HepG2 (cell line): ENCODE measurements at regions of chr20 and their contacts with region 1.

Region 1: DNA sequence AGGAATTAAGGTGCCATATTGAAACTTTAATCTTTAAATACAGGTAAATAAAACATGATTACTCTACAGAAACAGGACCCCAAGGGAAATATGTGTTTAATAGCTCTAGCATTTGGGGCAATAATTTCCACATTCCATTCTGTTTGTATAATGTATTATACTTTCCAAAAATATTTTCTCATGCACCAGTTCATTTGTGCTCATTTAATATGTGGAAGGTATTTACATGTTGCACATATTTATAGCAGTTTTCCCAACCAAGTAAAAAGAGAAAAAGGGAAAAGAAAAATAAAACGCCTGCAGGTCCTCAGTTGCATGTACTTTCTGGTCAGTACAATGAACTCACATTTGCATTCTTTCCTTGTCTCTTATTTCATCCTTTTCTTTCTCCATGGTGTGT is 129.5 kb upstream of the SULF2 start:
- DNase-seq: no peak
- ATAC-seq: no peak
- H3K4me3 ChIP-seq: no peak overlapping the region
- H3K27ac ChIP-seq: no peak overlapping the region
- H3K4me1 ChIP-seq: peaks cover 56% of the 10 kb centered on the region
- H3K27me3 ChIP-seq: no peaks in the 10 kb centered on the region
- CTCF ChIP-seq: no peak
- EP300 ChIP-seq: no peak
- POLR2A ChIP-seq: no peak
- RAD21 ChIP-seq: no peak

Region 2: DNA sequence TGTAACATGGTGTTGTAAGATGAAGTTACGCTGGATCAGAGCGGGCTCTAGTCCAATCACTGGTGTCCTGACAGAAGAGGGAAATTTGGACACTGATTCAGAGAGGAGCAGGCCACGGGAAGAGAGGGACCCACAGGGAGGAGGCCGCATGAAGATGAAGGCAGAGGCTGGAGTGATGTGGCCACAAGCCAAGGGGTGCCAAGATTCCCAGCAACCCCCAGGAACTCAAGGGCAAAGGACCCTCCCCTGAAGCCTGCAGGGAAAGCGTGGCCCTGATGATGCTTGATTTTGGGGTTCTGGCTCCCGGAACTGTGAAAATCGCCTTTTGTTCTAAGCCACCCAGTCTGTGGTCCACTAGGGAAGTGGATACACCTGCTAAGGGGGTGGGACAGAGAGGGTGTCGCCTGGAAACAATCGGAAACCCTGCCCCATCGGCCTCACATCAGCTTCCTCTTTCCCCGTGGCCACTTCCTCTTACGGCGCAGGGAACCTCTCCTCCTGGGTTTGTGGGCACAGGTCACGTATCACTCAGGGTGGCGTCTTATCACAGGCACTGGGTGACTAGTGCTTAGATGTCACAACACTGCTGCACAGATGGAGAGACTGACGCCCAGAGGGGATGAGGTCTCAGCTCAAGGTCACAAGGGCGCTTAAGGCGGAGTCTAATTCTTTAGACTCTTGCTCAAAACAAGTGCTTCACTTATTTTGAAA is 187.5 kb before region 1 on chr20:
- CTCF ChIA-PET with region 1: no interaction called
- POLR2A ChIA-PET with region 1: no interaction called
- in situ Hi-C with region 1: no loop called
- intact Hi-C with region 1: no loop called
- DNase-seq: no peak
- ATAC-seq: no peak
- H3K4me3 ChIP-seq: no peak overlapping the region
- H3K27ac ChIP-seq: no peak overlapping the region
- H3K4me1 ChIP-seq: peaks cover 23% of the 10 kb centered on the region
- H3K27me3 ChIP-seq: no peaks in the 10 kb centered on the region
- CTCF ChIP-seq: no peak
- EP300 ChIP-seq: no peak
- POLR2A ChIP-seq: no peak
- RAD21 ChIP-seq: no peak

Region 3: GRCh38 chr20:47857566-47858471 is 57.0 kb before region 1 on chr20:
- CTCF ChIA-PET with region 1: no interaction called
- POLR2A ChIA-PET with region 1: no interaction called
- in situ Hi-C with region 1: no loop called
- intact Hi-C with region 1: no loop called
- DNase-seq: peak; percentile 24
- ATAC-seq: peak; percentile 42
- H3K4me3 ChIP-seq: peak overlapping the region in 1 of 3 experiments; percentile 17; a peak in 2 of 6 replicates
- H3K27ac ChIP-seq: no peak overlapping the region
- H3K4me1 ChIP-seq: peaks cover 15% of the 10 kb centered on the region
- H3K27me3 ChIP-seq: peaks cover 10 to 31% of the 10 kb centered on the region in 2 experiments; a peak in 4 of 5 replicates
- CTCF ChIP-seq: peak; percentile 17; the same call in 1 of the 2 replicates
- EP300 ChIP-seq: no peak
- POLR2A ChIP-seq: no peak
- RAD21 ChIP-seq: no peak

Region 4: DNA sequence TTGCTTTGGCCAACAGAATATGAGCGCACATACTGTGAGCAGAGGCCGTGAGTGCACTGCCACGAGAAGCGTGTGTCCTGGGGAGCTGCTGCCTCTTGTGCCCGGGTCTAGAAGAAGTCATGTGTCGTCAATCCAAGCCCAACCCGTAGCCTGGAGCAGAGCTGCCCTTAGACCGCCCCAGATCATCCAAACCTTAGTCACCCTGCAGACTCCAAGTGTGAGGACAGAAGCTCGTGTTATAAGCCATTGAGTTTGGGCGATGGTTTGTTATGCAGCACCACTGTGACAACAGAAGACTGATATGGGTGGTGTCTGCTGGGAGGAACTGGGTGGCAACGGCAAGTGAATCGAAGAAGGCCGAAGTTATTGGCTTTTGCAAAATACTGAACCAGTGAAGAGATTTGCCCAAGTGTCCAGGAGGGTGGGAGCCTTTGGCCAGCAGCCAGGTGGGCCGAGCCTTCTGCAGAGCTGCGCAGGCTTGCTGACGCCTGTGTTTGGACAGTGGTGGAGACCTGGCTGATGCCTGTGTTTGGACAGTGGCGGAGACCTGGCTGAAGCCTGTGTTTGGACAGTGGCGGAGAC is 28.2 kb before region 1 on chr20:
- CTCF ChIA-PET with region 1: no interaction called
- POLR2A ChIA-PET with region 1: no interaction called
- in situ Hi-C with region 1: no loop called
- intact Hi-C with region 1: no loop called
- DNase-seq: peak; percentile 88
- ATAC-seq: peak; percentile 97
- H3K4me3 ChIP-seq: peak overlapping the region in 1 of 3 experiments; percentile 14; a peak in 1 of 6 replicates
- H3K27ac ChIP-seq: no peak overlapping the region
- H3K4me1 ChIP-seq: peaks cover 20% of the 10 kb centered on the region
- H3K27me3 ChIP-seq: peaks cover 2 to 35% of the 10 kb centered on the region in 2 experiments; a peak in 4 of 5 replicates
- CTCF ChIP-seq: no peak
- EP300 ChIP-seq: no peak
- POLR2A ChIP-seq: no peak
- RAD21 ChIP-seq: peak; percentile 23; the same call in 1 of the 2 replicates

Region 5: DNA sequence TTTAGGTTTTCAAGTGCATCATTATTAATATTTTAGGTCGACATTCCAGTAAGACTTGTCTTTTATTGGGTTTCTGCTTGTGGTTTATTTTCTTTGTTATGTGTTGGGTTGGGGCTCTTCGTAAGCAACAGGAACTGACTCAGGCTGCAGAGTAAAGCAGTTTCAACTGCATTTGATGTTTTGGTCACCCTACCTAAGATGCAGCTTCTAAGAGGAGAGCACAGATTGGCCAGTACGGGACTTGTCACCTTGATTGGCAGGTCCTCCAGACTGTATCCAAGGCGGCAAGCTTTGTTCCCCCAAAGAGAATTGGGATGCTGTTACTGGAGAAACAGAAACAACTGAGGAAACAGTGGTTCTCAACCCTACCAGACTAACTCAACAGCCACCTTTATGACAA is 20.0 kb after region 1 on chr20:
- CTCF ChIA-PET with region 1: no interaction called
- POLR2A ChIA-PET with region 1: no interaction called
- in situ Hi-C with region 1: no loop called
- intact Hi-C with region 1: no loop called
- DNase-seq: no peak
- ATAC-seq: no peak
- H3K4me3 ChIP-seq: no peak overlapping the region
- H3K27ac ChIP-seq: no peak overlapping the region
- H3K4me1 ChIP-seq: no peaks in the 10 kb centered on the region
- H3K27me3 ChIP-seq: peaks cover 0 to 30% of the 10 kb centered on the region in 2 experiments; a peak in 4 of 5 replicates
- CTCF ChIP-seq: no peak
- EP300 ChIP-seq: no peak
- POLR2A ChIP-seq: no peak
- RAD21 ChIP-seq: no peak

Region 6: GRCh38 chr20:47973519-47974233 is 58.9 kb after region 1 on chr20:
- CTCF ChIA-PET with region 1: no interaction called
- POLR2A ChIA-PET with region 1: no interaction called
- in situ Hi-C with region 1: no loop called
- intact Hi-C with region 1: loop called (anchors 1 kb)
- DNase-seq: peak; percentile 99
- ATAC-seq: peak; percentile 89
- H3K4me3 ChIP-seq: peak overlapping the region in 1 of 3 experiments; percentile 61; a peak in 2 of 6 replicates
- H3K27ac ChIP-seq: peak overlapping the region; percentile 97
- H3K4me1 ChIP-seq: peaks cover 91% of the 10 kb centered on the region
- H3K27me3 ChIP-seq: no peaks in the 10 kb centered on the region
- CTCF ChIP-seq: peak; percentile 14; the same call in 1 of the 2 replicates
- EP300 ChIP-seq: peak; percentile 92 to 93
- POLR2A ChIP-seq: peak; percentile 58 to 59
- RAD21 ChIP-seq: peak; percentile 59; the same call in 1 of the 2 replicates